Activated CD4-positive, alpha-beta memory T cell treated with anti-CD3 and anti-CD28 coated beads, Interleukin-2, amount 10 ng/mL, durations not matched to agents 7 days and 5 days (primary cell): ENCODE measurements at regions of chr9 and their contacts with region 1.

Region 1: GRCh38 chr9:88303721-88304451 is 84.4 kb upstream of the SPIN1 start:
- DNase-seq: peak; percentile 78
- H3K4me3 Mint-ChIP-seq: peak overlapping the region; percentile 63
- H3K27ac Mint-ChIP-seq: peak overlapping the region; percentile 87
- H3K4me1 Mint-ChIP-seq: peaks cover 39% of the 10 kb centered on the region
- H3K27me3 Mint-ChIP-seq: peaks cover 17% of the 10 kb centered on the region

Region 2: GRCh38 chr9:88041447-88041846 is 262.4 kb before region 1 on chr9:
- CTCF ChIA-PET with region 1: no interaction called
- POLR2A ChIA-PET with region 1: no interaction called
- DNase-seq: no peak
- H3K4me3 Mint-ChIP-seq: no peak overlapping the region
- H3K27ac Mint-ChIP-seq: no peak overlapping the region
- H3K4me1 Mint-ChIP-seq: no peaks in the 10 kb centered on the region
- H3K27me3 Mint-ChIP-seq: no peaks in the 10 kb centered on the region

Region 3: DNA sequence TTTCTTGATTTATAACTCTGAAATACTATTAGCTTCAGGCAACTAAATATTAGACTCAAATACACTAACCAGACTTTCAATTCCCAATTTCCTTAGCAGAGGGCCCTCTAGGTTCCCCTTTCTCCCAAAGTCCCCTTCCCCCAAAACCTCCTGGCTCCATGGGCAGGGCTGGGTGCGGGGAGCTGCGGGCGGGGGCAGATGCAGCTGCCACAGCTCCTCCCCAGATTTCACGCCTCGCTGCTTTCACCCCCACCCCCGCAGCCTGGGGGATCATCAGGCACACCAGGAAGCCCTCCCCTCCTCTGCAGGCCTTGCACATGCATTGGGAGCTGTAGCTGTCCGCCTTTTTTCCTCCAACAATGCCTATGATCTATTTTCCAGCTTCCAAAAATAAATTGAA is 82.8 kb before region 1 on chr9:
- CTCF ChIA-PET with region 1: no interaction called
- POLR2A ChIA-PET with region 1: no interaction called
- DNase-seq: no peak
- H3K4me3 Mint-ChIP-seq: no peak overlapping the region
- H3K27ac Mint-ChIP-seq: no peak overlapping the region
- H3K4me1 Mint-ChIP-seq: no peaks in the 10 kb centered on the region
- H3K27me3 Mint-ChIP-seq: peaks cover 8% of the 10 kb centered on the region

Region 4: DNA sequence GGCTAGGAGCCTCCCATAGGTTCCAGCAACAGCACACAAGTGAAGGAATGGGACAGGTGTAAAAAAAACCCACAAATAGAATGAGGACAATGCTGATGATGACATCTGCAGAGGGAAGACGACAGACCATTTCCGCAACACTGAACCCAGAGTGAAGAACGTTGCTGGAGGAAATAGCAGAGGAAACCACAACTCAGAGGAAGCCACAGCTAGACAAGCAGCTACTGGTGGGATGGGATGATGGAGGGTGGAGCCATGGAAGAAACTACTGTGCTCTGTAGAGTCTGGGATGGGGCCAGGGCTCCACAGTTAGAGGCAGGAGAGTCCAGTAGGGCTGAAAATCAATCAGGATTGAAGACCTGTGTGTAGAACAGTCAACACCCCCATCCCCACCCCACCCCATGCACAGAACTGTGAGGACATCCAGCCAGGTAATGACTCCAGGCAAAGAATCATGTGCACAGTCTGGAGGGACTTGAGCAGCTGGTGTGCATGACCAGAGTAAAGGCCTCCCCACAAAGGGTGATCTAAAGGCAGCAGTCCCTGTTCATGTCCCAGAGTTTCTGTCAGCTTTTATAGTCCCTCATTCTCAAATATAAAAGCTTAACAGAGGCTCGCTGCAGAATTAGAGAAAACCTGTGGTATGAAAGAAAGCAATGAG is 19.1 kb after region 1 on chr9:
- CTCF ChIA-PET with region 1: interaction called, 6 read pairs
- POLR2A ChIA-PET with region 1: interaction called, 32 read pairs
- DNase-seq: peak; percentile 82
- H3K4me3 Mint-ChIP-seq: peak overlapping the region; percentile 15
- H3K27ac Mint-ChIP-seq: peak overlapping the region; percentile 90
- H3K4me1 Mint-ChIP-seq: peaks cover 58% of the 10 kb centered on the region
- H3K27me3 Mint-ChIP-seq: peaks cover 8% of the 10 kb centered on the region